Activated B cell treated with CpG ODN at 0.5 μM for 24 hours (primary cell): ENCODE measurements at regions of chr2 and their contacts with region 1.

Region 1: DNA sequence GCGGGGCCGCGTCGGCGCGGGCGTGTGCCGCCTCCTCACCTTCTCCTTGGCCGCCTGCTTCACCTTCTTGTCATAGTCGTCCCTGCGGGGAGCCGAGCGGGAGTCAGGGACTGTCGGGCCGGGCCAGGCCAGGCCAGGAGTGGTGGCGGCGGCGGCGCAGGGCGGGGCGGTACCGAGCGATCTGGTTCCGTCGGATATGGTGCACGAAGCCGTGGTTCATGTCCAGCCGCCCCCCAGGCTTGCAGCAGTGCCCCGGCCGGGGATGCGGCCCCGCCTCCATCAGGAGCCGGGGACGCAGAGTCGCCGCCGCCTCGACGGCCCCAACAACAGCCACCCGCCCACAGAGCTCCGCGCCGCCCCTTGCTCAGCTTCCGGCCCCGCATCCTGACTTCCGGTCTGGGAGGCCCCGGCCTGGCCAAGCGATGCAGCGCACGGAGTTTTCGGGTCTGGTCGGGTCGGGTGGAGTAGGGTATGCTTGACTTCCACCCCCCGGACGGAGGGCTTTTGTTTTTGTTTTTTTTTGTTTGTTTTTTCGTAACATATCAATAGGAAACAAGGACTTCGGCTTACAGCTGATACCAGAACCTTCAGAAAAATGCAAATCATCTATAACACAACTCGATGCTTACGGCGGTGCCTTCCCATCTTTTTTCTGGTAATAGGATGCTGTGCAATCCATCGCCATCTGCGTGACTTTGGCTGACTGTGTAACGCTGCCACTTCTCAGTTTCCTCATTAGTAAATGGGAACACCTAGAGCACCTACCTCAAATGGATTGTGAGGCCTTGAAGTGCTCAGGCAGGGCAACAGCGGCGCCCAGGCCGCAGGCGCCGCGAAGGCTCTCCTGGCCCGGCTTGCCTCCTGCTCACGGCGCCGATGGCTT is at the start of gene C2orf68:
- DNase-seq: peak; percentile 81
- ATAC-seq: peak; percentile 73
- H3K4me3 Mint-ChIP-seq: peak within 1 kb of the TSS; percentile 98
- H3K27ac Mint-ChIP-seq: peak within 1 kb of the TSS; percentile 91
- H3K4me1 Mint-ChIP-seq: peaks cover 39% of the 10 kb centered on the region
- H3K27me3 Mint-ChIP-seq: no peaks in the 10 kb centered on the region
- CTCF ChIP-seq: no peak
- total RNA-seq, gene C2orf68: 49.7 and 61.5 TPM in 2 replicates

Region 2: DNA sequence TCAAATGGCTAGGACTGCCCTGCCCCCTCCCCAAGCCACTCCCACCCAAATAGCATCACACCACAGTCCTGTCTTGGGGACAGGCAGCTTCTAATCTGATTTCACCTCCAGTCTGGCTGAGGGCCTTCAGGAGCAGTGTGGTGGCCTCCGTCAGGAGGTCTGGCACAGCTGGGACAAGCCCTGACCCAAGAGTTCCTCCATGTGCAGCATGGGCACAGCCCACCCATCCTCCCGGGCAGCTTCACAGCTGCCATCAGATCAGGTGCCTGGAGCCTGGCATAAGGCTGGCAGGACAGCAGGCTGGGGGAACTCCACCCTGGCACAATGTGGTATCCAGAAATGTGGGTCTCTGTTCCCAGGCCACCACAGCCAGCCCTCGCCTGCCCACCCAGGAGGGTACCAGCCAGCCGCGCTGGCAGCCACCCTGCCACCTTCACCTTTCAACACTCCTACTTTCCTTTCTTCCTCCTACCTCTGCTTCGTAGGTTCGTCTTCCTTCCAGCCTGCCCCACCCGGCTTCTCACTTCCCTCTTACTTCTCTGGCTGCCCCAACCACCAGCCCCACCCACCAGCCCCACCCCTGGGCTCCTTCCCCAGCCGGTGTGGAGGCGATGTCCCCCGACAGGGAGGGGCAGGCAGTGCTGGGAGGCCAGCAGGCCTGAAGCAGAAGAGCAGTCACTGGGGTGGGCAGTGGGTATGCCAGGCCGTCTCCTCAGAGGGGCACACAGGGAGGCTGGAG is 201.9 kb before region 1 on chr2 and contains the start of gene CAPG:
- CTCF ChIA-PET with region 1: no interaction called
- POLR2A ChIA-PET with region 1: no interaction called
- intact Hi-C with region 1: no loop called
- DNase-seq: peak; percentile 76
- ATAC-seq: peak; percentile 75
- H3K4me3 Mint-ChIP-seq: peak within 1 kb of the TSS; percentile 89
- H3K27ac Mint-ChIP-seq: peak within 1 kb of the TSS; percentile 92
- H3K4me1 Mint-ChIP-seq: peaks cover 90% of the 10 kb centered on the region
- H3K27me3 Mint-ChIP-seq: no peaks in the 10 kb centered on the region
- CTCF ChIP-seq: no peak
- total RNA-seq, gene CAPG: 208 and 213 TPM in 2 replicates

Region 3: DNA sequence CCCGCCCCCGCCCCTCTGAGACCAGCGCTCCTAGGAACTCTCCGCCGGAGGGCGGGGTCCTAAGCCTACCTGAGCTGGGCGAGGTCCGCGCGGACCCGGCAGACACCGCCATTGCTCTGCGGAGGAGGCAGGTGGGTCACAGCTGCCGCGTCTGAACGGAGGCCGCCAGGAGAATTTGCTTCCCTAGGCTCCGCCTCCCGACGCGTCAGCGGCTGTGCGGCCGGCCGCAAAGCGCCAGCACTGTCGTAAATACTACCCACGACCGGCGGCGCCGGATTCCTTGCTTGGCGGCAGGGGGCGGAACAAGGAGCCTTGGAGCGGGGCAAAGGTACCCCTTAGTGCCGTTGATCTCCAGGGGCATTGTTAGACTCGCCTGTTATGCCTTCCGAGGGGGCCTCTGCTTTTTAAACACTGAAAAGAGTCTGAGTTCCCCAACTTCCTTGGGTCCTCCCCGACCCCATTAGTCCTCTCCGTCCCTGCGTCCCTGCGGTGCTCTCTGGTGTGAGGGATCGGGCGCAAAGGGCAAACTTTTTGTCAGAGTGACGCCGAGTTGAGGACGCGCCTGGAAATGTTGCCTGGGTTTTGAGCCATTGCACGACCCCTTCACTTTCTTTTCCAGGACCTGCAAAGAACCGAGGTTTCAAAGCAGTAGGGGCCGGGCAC is 50.5 kb before region 1 on chr2 and contains the start of gene GGCX:
- CTCF ChIA-PET with region 1: no interaction called
- POLR2A ChIA-PET with region 1: interaction called, 10 read pairs
- intact Hi-C with region 1: loop called (anchors 1 kb)
- DNase-seq: peak; percentile 84
- ATAC-seq: peak; percentile 88
- H3K4me3 Mint-ChIP-seq: peak within 1 kb of the TSS; percentile 98
- H3K27ac Mint-ChIP-seq: peak within 1 kb of the TSS; percentile 98
- H3K4me1 Mint-ChIP-seq: peaks cover 38% of the 10 kb centered on the region
- H3K27me3 Mint-ChIP-seq: no peaks in the 10 kb centered on the region
- CTCF ChIP-seq: no peak
- total RNA-seq, gene GGCX: 30.0 and 30.7 TPM in 2 replicates

Region 4: GRCh38 chr2:85797921-85798320 is 186.0 kb after region 1 on chr2:
- CTCF ChIA-PET with region 1: no interaction called
- POLR2A ChIA-PET with region 1: no interaction called
- intact Hi-C with region 1: no loop called
- DNase-seq: no peak
- ATAC-seq: no peak
- H3K4me3 Mint-ChIP-seq: no peak overlapping the region
- H3K27ac Mint-ChIP-seq: no peak overlapping the region
- H3K4me1 Mint-ChIP-seq: no peaks in the 10 kb centered on the region
- H3K27me3 Mint-ChIP-seq: peaks cover 44% of the 10 kb centered on the region
- CTCF ChIP-seq: no peak